Activated CD4-positive, alpha-beta T cell treated with anti-CD3 and anti-CD28 coated beads, Interleukin-2, amount 10 ng/mL, durations not matched to agents 7 days and 5 days (primary cell): ENCODE measurements at regions of chr5 and their contacts with region 1.

Region 1: DNA sequence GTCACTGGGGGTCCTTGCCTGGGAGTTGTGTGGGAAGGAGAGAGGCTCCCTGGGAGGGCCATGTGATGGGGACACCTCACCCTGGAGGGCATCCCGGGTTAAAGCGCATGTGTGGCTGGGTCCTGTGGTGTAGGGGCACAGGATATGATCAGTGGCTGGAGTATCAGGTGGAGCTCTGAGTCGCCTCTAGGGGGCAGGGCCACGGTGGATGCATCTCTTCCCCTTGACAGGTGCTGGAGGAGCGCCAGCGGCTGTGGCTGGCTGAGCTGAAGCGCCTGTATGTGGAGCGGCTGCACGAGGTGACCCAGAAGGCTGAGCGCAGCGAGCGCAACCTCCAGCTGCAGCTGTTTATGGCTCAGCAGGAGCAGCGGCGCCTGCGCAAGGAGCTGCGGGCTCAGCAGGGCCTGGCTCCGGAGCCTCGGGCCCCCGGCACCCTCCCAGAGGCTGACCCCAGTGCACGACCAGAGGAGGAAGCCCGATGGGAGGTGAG is 7.6 kb downstream of the N4BP3 start:
- DNase-seq: peak; percentile 90
- H3K4me3 Mint-ChIP-seq: peak overlapping the region; percentile 38
- H3K27ac Mint-ChIP-seq: peak overlapping the region; percentile 25
- H3K4me1 Mint-ChIP-seq: peaks cover 24% of the 10 kb centered on the region
- H3K27me3 Mint-ChIP-seq: peaks cover 4% of the 10 kb centered on the region

Region 2: DNA sequence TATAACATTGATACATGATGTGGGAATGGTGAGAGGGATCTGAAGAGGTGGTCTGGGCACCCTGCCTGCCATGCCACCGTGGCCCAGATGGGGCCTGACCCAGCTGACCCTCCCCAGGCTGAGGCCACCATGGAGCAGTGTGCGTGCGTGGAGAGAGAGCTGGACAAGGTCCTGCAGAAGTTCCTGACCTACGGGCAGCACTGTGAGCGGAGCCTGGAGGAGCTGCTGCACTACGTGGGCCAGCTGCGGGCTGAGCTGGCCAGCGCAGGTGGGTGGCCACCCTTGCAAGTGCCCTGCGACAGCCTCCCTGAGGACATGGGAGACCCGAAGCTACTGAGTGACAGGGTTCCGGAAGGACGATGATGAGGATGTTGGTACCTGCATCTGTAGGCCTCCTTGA is 17.1 kb after region 1 on chr5:
- CTCF ChIA-PET with region 1: interaction called, 39 read pairs
- POLR2A ChIA-PET with region 1: no interaction called
- DNase-seq: no peak
- H3K4me3 Mint-ChIP-seq: no peak overlapping the region
- H3K27ac Mint-ChIP-seq: no peak overlapping the region
- H3K4me1 Mint-ChIP-seq: peaks cover 9% of the 10 kb centered on the region
- H3K27me3 Mint-ChIP-seq: no peaks in the 10 kb centered on the region

Region 3: DNA sequence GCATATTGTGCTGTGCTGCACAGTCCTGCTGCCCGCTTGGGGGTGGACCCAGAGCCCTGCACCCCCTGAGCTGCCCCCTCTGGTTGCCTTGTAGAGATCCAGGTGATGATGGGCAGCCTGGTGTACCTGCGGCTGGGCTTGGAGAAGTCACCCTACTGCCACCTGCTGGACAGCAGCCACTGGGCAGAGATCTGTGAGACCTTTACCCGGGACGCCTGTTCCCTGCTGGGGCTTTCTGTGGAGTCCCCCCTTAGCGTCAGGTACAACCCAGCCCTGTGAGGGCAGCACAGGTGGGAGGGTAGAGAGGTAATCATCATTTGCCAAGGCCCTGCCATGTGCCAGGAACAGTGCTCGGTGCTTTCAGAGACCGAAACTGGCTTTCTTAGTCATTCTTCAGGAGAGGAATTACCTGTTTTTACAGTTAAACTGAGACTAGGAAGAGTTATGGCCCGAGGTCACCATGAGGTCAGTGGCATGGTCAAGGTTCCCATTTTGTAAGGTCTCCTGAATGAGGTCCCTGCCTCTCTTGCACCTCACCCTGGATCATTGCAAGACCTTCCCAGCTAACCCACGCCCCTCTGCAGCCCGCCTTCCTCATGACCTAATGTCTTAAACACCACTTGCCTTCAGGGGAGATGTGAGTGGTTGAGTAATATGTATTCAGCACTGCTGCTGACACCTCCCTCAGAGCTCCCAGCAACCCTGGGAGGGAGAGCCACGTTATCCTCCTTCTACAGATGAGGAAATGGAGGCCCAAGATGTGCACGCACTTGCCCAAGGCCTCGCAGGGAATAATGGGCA is 25.3 kb after region 1 on chr5:
- CTCF ChIA-PET with region 1: interaction called, 16 read pairs
- POLR2A ChIA-PET with region 1: no interaction called
- DNase-seq: peak; percentile 77
- H3K4me3 Mint-ChIP-seq: no peak overlapping the region
- H3K27ac Mint-ChIP-seq: no peak overlapping the region
- H3K4me1 Mint-ChIP-seq: peaks cover 27% of the 10 kb centered on the region
- H3K27me3 Mint-ChIP-seq: no peaks in the 10 kb centered on the region